PC-3 (cell line): ENCODE measurements at regions of chr3 and their contacts with region 1.

Region 1: DNA sequence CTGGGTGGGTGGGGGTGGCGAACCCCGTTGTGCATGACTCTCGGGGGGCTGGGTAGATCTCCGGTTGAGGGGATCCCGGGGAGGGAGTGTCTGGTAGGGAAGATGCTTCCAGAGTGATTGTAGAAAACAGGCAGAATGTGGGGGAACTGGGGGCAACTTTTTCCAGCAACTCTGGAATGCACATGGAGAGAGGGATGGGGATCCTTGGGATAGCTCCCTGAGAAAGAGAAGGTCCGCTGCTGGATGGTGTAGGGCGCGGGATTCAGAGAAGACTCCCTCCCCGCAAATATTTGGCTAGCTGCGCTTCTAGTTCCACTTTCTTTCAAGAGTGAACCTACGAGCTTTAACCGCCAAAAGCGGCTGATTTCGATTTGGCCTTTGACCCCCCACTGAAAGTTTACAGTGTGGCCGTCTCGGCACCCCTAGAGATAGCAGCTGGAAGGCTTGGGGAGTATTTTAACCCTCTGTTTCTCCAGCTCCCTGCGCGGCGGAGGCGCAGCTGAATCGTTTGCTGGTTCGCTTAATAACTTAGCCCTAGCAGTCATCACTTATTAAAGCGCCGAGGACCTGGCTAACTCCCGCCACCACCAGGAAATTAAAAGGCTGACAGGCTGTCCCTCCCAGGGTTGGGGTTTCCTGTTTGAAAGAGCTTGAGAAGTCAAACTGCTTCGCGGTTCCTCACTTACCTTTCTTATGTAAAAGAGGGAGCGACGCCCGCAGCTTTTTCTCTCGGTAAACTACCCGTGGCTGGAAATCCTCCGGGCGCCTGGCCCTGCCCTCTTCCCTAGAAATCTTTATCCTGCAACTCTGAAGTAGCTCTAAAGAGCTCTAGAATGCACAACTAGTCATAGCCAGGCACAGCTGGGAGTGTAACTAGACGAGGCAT is 1.2 kb downstream of the PHLDB2 start:
- DNase-seq: peak; percentile 96
- ATAC-seq: peak; percentile 68
- H3K4me3 ChIP-seq: peak overlapping the region; percentile 72
- H3K27ac ChIP-seq: peak overlapping the region; percentile 94
- H3K4me1 ChIP-seq: peaks cover 46% of the 10 kb centered on the region
- H3K27me3 ChIP-seq: no peaks in the 10 kb centered on the region
- CTCF ChIP-seq: peak; percentile 71

Region 2: GRCh38 chr3:111668912-111669488 is 191.2 kb before region 1 on chr3:
- CTCF ChIA-PET with region 1: interaction called, 3 read pairs
- POLR2A ChIA-PET with region 1: no interaction called
- intact Hi-C with region 1: loop called (anchors 2 kb)
- DNase-seq: peak; percentile 81
- ATAC-seq: peak; percentile 82
- H3K4me3 ChIP-seq: no peak overlapping the region
- H3K27ac ChIP-seq: no peak overlapping the region
- H3K4me1 ChIP-seq: peaks cover 50% of the 10 kb centered on the region
- H3K27me3 ChIP-seq: no peaks in the 10 kb centered on the region
- CTCF ChIP-seq: peak; percentile 95

Region 3: GRCh38 chr3:111691293-111691909 is 168.8 kb before region 1 on chr3:
- CTCF ChIA-PET with region 1: interaction called, 12 read pairs
- POLR2A ChIA-PET with region 1: no interaction called
- intact Hi-C with region 1: no loop called
- DNase-seq: peak; percentile 73
- ATAC-seq: peak; percentile 52
- H3K4me3 ChIP-seq: no peak overlapping the region
- H3K27ac ChIP-seq: no peak overlapping the region
- H3K4me1 ChIP-seq: peaks cover 41% of the 10 kb centered on the region
- H3K27me3 ChIP-seq: no peaks in the 10 kb centered on the region
- CTCF ChIP-seq: peak; percentile 88

Region 4: GRCh38 chr3:111737706-111738086 is 122.5 kb before region 1 on chr3:
- CTCF ChIA-PET with region 1: interaction called, 16 read pairs
- POLR2A ChIA-PET with region 1: interaction called, 12 read pairs
- intact Hi-C with region 1: loop called (anchors 1 kb)
- DNase-seq: peak; percentile 96
- ATAC-seq: peak; percentile 60
- H3K4me3 ChIP-seq: no peak overlapping the region
- H3K27ac ChIP-seq: peak overlapping the region; percentile 74
- H3K4me1 ChIP-seq: peaks cover 65% of the 10 kb centered on the region
- H3K27me3 ChIP-seq: no peaks in the 10 kb centered on the region
- CTCF ChIP-seq: no peak

Region 5: GRCh38 chr3:111803123-111803593 is 57.1 kb before region 1 on chr3:
- CTCF ChIA-PET with region 1: interaction called, 6 read pairs
- POLR2A ChIA-PET with region 1: interaction called, 7 read pairs
- intact Hi-C with region 1: loop called (anchors 2 kb)
- DNase-seq: peak; percentile 99
- ATAC-seq: peak; percentile 88
- H3K4me3 ChIP-seq: peak overlapping the region; percentile 29; the same call in 1 of the 2 replicates
- H3K27ac ChIP-seq: peak overlapping the region; percentile 97
- H3K4me1 ChIP-seq: peaks cover 46% of the 10 kb centered on the region
- H3K27me3 ChIP-seq: no peaks in the 10 kb centered on the region
- CTCF ChIP-seq: no peak

Region 6: GRCh38 chr3:112013058-112013783 is 153.0 kb after region 1 on chr3:
- CTCF ChIA-PET with region 1: interaction called, 5 read pairs
- POLR2A ChIA-PET with region 1: no interaction called
- intact Hi-C with region 1: loop called (anchors 2 kb)
- DNase-seq: peak; percentile 86
- ATAC-seq: peak; percentile 85
- H3K4me3 ChIP-seq: no peak overlapping the region
- H3K27ac ChIP-seq: no peak overlapping the region
- H3K4me1 ChIP-seq: 0 out of 2 replicates have a peak, but pooled peaks cover 5% of the 10 kb centered on the region
- H3K27me3 ChIP-seq: no peaks in the 10 kb centered on the region
- CTCF ChIP-seq: peak; percentile 85